HEK293 (cell line): ENCODE measurements at regions of chr10 and their contacts with region 1.

Region 1: DNA sequence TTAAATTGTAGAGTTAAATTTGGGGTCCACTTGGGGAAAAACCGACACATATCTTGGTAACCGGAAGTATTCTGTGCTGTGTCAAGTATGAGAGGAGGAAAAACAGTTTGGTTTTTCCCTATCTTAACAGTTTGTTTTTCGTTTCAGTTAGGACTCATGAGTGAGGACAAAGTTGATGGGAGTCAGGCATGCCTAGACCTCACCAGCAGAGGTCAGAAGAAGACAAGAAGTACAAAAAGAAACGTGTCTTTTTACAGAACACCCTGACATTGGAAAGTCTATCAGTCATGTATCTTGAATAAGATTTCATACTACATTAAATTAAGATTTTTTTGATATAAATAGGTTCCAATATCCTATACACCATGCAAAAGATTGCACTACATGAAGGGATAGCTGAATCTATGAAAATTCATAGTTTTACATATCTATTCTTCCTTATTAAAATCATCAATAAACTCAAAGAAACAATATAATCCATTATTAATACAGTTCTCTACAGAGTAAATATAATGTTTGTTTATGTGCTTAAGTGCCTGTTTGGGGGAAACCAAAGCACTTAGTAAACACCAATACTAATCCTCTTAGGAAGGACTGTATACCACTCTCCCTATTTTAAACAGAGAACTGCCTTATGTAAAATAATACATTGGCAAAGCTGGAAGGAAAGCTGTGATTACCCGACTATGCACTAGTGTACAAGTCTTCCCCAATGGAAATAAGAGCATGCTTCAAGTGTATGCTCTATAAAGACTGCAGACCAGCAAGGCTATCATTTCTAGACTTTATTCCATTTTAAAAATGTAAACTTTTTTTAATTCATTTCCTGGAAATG is 95.6 kb downstream of the USP6NL start:
- H3K4me3 ChIP-seq: no peak overlapping the region
- H3K27ac ChIP-seq: no peak overlapping the region
- H3K4me1 ChIP-seq: no peaks in the 10 kb centered on the region
- CTCF ChIP-seq: peak; percentile 52; the same call in 1 of the 2 replicates

Region 2: DNA sequence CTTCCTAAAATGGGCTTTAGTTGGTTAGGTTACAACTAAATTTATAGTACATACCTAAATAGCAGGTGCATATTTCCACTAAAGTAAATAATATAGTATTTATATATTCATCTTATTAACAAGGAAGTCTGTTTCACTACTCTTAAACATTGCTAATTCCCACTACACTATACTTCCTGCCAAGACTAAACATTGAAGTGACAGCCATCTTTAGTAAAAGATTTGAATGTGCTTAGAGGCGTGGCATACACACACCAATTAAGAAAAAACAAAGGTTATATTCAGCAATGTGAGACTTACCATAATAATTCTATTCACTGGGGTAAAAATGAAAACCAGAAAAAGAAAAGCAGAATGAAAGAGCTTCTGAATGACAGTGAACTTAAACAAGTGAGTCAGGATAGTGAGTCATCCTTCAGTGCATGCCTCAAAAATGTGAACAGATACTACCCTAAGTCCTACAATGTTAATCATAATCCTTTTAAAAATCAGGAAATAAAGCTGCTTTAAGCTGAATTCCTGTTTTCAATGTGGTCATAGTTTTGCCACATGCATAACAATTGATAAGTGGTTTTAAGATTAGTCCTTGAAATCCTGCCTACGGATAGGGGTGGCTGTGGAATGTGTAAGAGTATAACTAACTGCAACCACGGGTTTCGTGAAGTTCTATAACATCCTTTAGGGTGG is 36.2 kb after region 1 on chr10:
- CTCF ChIA-PET with region 1: no interaction called
- POLR2A ChIA-PET with region 1: no interaction called
- H3K4me3 ChIP-seq: no peak overlapping the region
- H3K27ac ChIP-seq: no peak overlapping the region
- H3K4me1 ChIP-seq: peaks cover 3% of the 10 kb centered on the region; the same call in 1 of the 2 replicates
- CTCF ChIP-seq: no peak

Region 3: DNA sequence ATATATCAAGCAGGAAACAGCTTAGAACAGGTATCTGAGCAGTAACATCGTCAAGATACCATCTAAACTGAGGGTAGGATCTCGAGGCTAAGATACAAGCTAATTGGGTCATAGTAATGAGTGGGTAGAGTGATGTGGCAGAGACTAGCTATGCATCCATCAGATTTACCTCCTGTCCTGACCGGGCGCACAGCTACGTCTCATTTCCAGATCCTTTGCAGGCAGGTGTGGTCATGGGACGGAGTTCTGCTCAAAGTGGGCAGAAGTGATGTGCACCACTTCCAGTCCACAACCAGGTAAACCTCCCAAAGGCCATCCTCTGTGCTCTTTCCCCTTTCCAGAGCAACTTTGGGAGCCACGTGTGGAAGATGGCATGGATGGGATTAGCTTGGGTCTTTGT is 126.3 kb after region 1 on chr10:
- CTCF ChIA-PET with region 1: interaction called, 11 read pairs
- POLR2A ChIA-PET with region 1: no interaction called
- H3K4me3 ChIP-seq: no peak overlapping the region
- H3K27ac ChIP-seq: no peak overlapping the region
- H3K4me1 ChIP-seq: no peaks in the 10 kb centered on the region
- CTCF ChIP-seq: no peak

Region 4: GRCh38 chr10:11724938-11725776 is 209.3 kb after region 1 on chr10:
- CTCF ChIA-PET with region 1: interaction called, 23 read pairs
- POLR2A ChIA-PET with region 1: no interaction called
- H3K4me3 ChIP-seq: no peak overlapping the region
- H3K27ac ChIP-seq: no peak overlapping the region
- H3K4me1 ChIP-seq: no peaks in the 10 kb centered on the region
- CTCF ChIP-seq: peak; percentile 54; the same call in 1 of the 2 replicates